PC-9 (cell line): ENCODE measurements at regions of chr7 and their contacts with region 1.

Region 1: GRCh38 chr7:135884495-135885232 is 92.5 kb downstream of the MTPN start:
- DNase-seq: no peak
- H3K4me3 ChIP-seq: no peak overlapping the region
- H3K27ac ChIP-seq: no peak overlapping the region
- H3K4me1 ChIP-seq: peaks cover 13% of the 10 kb centered on the region
- H3K27me3 ChIP-seq: no peaks in the 10 kb centered on the region
- CTCF ChIP-seq: no peak

Region 2: DNA sequence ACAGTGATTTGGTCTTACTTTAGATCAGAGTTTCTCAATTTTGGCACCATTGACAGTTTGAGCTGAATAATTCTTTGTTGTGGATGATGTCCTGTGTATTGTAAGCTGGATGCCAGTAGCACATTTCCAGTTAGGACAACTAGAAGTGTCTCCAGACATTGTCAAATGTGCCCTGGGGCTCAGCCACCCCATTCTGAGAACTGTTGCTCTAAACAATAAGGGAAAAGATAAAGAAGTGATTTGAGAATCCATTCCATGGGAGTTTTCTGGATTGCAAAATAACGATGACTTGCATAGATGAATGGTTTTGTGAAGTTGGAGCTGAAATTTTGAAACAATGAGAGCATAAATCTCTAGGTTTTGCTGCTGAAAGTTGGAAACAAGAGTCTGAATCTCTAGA is 282.4 kb before region 1 on chr7:
- CTCF ChIA-PET with region 1: no interaction called
- POLR2A ChIA-PET with region 1: interaction called, 12 read pairs
- intact Hi-C with region 1: no loop called
- DNase-seq: no peak
- H3K4me3 ChIP-seq: no peak overlapping the region
- H3K27ac ChIP-seq: no peak overlapping the region; the same call in 1 of the 2 replicates
- H3K4me1 ChIP-seq: no peaks in the 10 kb centered on the region
- H3K27me3 ChIP-seq: no peaks in the 10 kb centered on the region
- CTCF ChIP-seq: no peak

Region 3: DNA sequence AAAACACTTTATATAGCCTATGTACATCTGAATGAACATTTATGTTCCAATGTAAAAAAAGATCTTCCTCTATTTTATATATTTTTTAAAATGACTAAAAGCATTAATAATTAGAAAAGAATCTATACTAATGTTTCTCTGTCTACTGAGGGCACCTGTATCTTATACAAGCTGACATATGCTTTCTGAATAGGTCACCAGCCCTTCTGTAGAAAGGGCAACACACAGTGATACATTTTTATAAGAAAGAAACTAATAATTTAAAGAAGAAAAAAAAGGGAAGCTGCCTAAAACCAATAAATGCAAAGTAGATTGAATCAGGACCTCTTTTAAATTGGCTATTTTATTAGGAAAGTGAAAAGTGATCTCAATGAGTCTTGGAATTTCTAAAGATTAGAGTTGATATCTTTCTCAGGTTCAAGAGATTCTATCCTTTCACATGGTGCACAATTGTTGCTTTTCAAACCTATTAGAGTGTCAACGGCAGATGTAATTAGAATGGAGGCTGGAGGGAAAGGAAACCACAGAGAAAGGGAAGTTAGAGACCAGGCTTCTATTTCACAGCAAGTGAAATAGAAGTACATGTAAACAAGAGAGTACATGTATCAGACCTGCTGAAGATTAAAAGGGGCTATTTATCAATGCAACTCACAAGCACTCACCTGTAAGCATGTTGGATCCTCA is 86.2 kb after region 1 on chr7:
- CTCF ChIA-PET with region 1: no interaction called
- POLR2A ChIA-PET with region 1: no interaction called
- intact Hi-C with region 1: no loop called
- DNase-seq: no peak
- H3K4me3 ChIP-seq: no peak overlapping the region
- H3K27ac ChIP-seq: no peak overlapping the region
- H3K4me1 ChIP-seq: peaks cover 13% of the 10 kb centered on the region
- H3K27me3 ChIP-seq: no peaks in the 10 kb centered on the region
- CTCF ChIP-seq: no peak